ENCODE measurements at regions of chr22 and their contacts with region 1.

Region 1: DNA sequence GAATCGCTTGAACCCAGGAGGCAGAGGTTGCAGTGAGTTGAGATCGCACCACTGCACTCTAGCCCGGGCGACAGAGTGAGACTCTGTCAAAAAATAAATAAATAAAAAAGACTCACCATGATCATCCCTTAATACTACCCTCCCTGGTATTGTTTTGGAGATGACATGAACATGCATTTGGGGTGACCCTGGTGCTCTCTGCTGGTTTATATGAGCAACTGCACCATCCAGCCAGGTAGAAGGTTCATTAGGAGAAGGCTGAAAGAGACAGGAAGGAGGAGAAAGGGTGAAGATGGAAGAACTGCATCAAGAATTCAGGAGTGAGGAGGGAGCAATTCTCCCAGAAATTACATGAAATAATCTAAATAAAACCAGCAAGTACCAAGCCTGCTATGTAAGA is 37.8 kb downstream of the SLC5A1 start:
- DNase-seq: no peak
- ATAC-seq: peak in 3 of 4 donors; percentile 49 to 59 (median 52)
- H3K4me3 ChIP-seq: no peak overlapping the region
- H3K27ac ChIP-seq: no peak overlapping the region
- H3K4me1 ChIP-seq: peaks cover 0 to 42% (median 13%) of the 10 kb centered on the region in 12 donors
- H3K27me3 ChIP-seq: no peaks in the 10 kb centered on the region
- CTCF ChIP-seq: peak; percentile 21 to 66 (median 55)
- POLR2A ChIP-seq: no peak

Region 2: GRCh38 chr22:31952459-31952858 is 128.4 kb before region 1 on chr22:
- intact Hi-C with region 1: no loop called
- DNase-seq: no peak
- ATAC-seq: peak in 3 of 4 donors; percentile 19 to 71 (median 44)
- H3K4me3 ChIP-seq: no peak overlapping the region
- H3K27ac ChIP-seq: peak overlapping the region in 8 of 12 donors; percentile 2 to 82 (median 52)
- H3K4me1 ChIP-seq: peaks cover 7 to 78% (median 62%) of the 10 kb centered on the region in 12 donors
- H3K27me3 ChIP-seq: no peaks in the 10 kb centered on the region
- CTCF ChIP-seq: no peak
- POLR2A ChIP-seq: no peak

Region 3: GRCh38 chr22:31983911-31984656 is 96.8 kb before region 1 on chr22:
- intact Hi-C with region 1: loop called in 5 of 10 experiments (anchors 2 to 5 kb)
- DNase-seq: no peak
- ATAC-seq: no peak
- H3K4me3 ChIP-seq: no peak overlapping the region
- H3K27ac ChIP-seq: no peak overlapping the region
- H3K4me1 ChIP-seq: no peaks in the 10 kb centered on the region
- H3K27me3 ChIP-seq: peaks cover 0 to 1% (median 0%) of the 10 kb centered on the region in 9 donors
- CTCF ChIP-seq: no peak
- POLR2A ChIP-seq: no peak

Region 4: DNA sequence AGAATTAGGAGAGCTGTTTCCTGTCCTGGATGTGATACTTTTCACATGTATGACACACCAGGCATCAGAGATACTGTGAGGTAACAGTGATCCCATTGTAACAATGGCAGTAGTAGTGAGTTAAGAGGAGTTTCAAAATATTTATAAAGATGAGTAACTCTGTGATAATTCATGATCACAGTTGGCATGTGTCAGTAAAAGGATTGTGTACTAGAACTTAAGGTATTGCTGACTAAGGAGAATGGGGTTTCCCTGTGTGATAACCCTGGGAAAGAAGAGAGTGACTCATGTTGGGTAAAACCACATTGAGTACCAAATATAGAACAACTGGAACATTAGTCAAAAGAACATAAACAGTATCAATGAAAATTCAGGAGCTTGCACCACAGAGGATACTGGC is 60.8 kb before region 1 on chr22:
- intact Hi-C with region 1: loop called in 1 of 10 experiments (anchors 10 kb)
- DNase-seq: no peak
- ATAC-seq: no peak
- H3K4me3 ChIP-seq: no peak overlapping the region
- H3K27ac ChIP-seq: no peak overlapping the region
- H3K4me1 ChIP-seq: no peaks in the 10 kb centered on the region
- H3K27me3 ChIP-seq: no peaks in the 10 kb centered on the region
- CTCF ChIP-seq: no peak
- POLR2A ChIP-seq: no peak